CD8-positive, alpha-beta T cell (primary cell): ENCODE measurements at regions of chr6 and their contacts with region 1.

Region 1: GRCh38 chr6:34887753-34888513 is at the start of gene TAF11:
- DNase-seq: peak; percentile 74 to 96 (median 92)
- ATAC-seq: peak; percentile 67
- H3K4me3 ChIP-seq: peak within 1 kb of the TSS; percentile 84 to 93
- H3K4me3 Mint-ChIP-seq: peak within 1 kb of the TSS; percentile 100
- H3K27ac ChIP-seq: peak within 1 kb of the TSS; percentile 90 to 93
- H3K27ac Mint-ChIP-seq: peak within 1 kb of the TSS; percentile 99
- H3K4me1 ChIP-seq: peaks cover 21% of the 10 kb centered on the region
- H3K4me1 Mint-ChIP-seq: peaks cover 66% of the 10 kb centered on the region
- H3K27me3 ChIP-seq: no peaks in the 10 kb centered on the region
- H3K27me3 Mint-ChIP-seq: no peaks in the 10 kb centered on the region
- CTCF ChIP-seq: no peak
- total RNA-seq, gene TAF11: 40.0 to 40.6 TPM

Region 2: GRCh38 chr6:34392497-34393190 is 495.3 kb before region 1 on chr6 and contains the start of gene NUDT3:
- CTCF ChIA-PET with region 1: no interaction called
- POLR2A ChIA-PET with region 1: interaction called, 5 read pairs
- intact Hi-C with region 1: loop called in 1 of 2 experiments (anchors 10 kb)
- DNase-seq: peak; percentile 90 to 98 (median 93)
- ATAC-seq: peak; percentile 90
- H3K4me3 ChIP-seq: peak within 1 kb of the TSS; percentile 78 to 96
- H3K4me3 Mint-ChIP-seq: peak within 1 kb of the TSS; percentile 72
- H3K27ac ChIP-seq: peak within 1 kb of the TSS; percentile 71 to 75
- H3K27ac Mint-ChIP-seq: peak within 1 kb of the TSS; percentile 94
- H3K4me1 ChIP-seq: peaks cover 15% of the 10 kb centered on the region
- H3K4me1 Mint-ChIP-seq: peaks cover 26% of the 10 kb centered on the region
- H3K27me3 ChIP-seq: no peaks in the 10 kb centered on the region
- H3K27me3 Mint-ChIP-seq: no peaks in the 10 kb centered on the region
- CTCF ChIP-seq: peak; percentile 77
- total RNA-seq, gene NUDT3: 12.5 to 12.9 TPM

Region 3: GRCh38 chr6:34671801-34672656 is 215.9 kb before region 1 on chr6:
- CTCF ChIA-PET with region 1: no interaction called
- POLR2A ChIA-PET with region 1: interaction called, 3 read pairs
- intact Hi-C with region 1: loop called in 1 of 2 experiments (anchors 2 kb)
- DNase-seq: peak; percentile 52 to 94 (median 75)
- ATAC-seq: peak; percentile 98
- H3K4me3 ChIP-seq: peak overlapping the region in 1 of 2 experiments; percentile 21
- H3K4me3 Mint-ChIP-seq: peak overlapping the region; percentile 72
- H3K27ac ChIP-seq: peak overlapping the region; percentile 25 to 82
- H3K27ac Mint-ChIP-seq: peak overlapping the region; percentile 95
- H3K4me1 ChIP-seq: peaks cover 50% of the 10 kb centered on the region
- H3K4me1 Mint-ChIP-seq: peaks cover 71% of the 10 kb centered on the region
- H3K27me3 ChIP-seq: no peaks in the 10 kb centered on the region
- H3K27me3 Mint-ChIP-seq: no peaks in the 10 kb centered on the region
- CTCF ChIP-seq: no peak

Region 4: GRCh38 chr6:34757687-34758274 is 130.2 kb before region 1 on chr6:
- CTCF ChIA-PET with region 1: no interaction called
- POLR2A ChIA-PET with region 1: interaction called, 19 read pairs
- intact Hi-C with region 1: loop called (anchors 1 kb)
- DNase-seq: no peak
- ATAC-seq: no peak
- H3K4me3 ChIP-seq: peak overlapping the region; percentile 71 to 79
- H3K4me3 Mint-ChIP-seq: no peak overlapping the region
- H3K27ac ChIP-seq: peak overlapping the region; percentile 86 to 92
- H3K27ac Mint-ChIP-seq: no peak overlapping the region
- H3K4me1 ChIP-seq: peaks cover 18% of the 10 kb centered on the region
- H3K4me1 Mint-ChIP-seq: peaks cover 20% of the 10 kb centered on the region
- H3K27me3 ChIP-seq: no peaks in the 10 kb centered on the region
- H3K27me3 Mint-ChIP-seq: no peaks in the 10 kb centered on the region
- CTCF ChIP-seq: no peak

Region 5: GRCh38 chr6:34851361-34851760 is 36.6 kb before region 1 on chr6:
- CTCF ChIA-PET with region 1: no interaction called
- POLR2A ChIA-PET with region 1: no interaction called
- intact Hi-C with region 1: no loop called
- DNase-seq: no peak
- ATAC-seq: no peak
- H3K4me3 ChIP-seq: no peak overlapping the region
- H3K4me3 Mint-ChIP-seq: no peak overlapping the region
- H3K27ac ChIP-seq: no peak overlapping the region
- H3K27ac Mint-ChIP-seq: no peak overlapping the region
- H3K4me1 ChIP-seq: no peaks in the 10 kb centered on the region
- H3K4me1 Mint-ChIP-seq: no peaks in the 10 kb centered on the region
- H3K27me3 ChIP-seq: no peaks in the 10 kb centered on the region
- H3K27me3 Mint-ChIP-seq: no peaks in the 10 kb centered on the region
- CTCF ChIP-seq: no peak

Region 6: DNA sequence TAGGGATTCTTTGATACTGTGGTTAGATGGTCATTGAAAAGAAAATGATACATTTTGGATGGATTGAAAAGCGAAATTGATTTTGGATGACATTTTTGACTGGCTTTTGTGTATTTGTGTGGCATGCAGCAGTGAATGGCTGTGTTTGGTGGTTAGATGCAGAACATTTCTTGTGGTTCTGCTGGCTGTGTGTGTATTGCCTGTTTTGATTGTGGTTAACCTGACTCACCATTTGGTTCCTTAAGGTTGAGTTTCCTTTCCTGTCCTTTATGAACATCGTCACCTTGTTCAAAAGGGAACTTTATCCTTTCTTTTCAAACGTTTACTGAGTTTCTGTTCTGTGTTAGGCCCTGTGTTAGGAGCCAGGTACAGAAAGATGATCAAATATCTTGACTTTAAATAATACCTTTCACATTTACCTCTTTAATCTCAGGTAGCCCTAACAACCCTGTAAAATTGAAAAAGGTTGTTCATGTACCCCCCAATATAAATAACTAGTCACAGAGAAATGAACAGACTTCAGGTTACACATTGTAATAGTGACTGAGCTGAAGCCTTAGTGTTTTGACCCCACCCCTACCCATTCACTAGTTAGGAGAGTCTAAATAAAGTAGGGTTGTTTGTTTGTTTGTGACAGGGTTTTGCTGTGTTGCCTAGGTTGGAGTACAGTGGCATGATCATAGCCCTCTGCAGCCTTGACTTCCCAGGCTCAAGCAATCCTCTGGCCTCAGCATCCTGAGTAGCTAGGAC is 25.0 kb after region 1 on chr6:
- CTCF ChIA-PET with region 1: no interaction called
- POLR2A ChIA-PET with region 1: interaction called, 14 read pairs
- intact Hi-C with region 1: loop called (anchors 2 kb)
- DNase-seq: peak in 7 of 9 experiments; percentile 10 to 73 (median 38)
- ATAC-seq: peak; percentile 89
- H3K4me3 ChIP-seq: peak overlapping the region in 1 of 2 experiments; percentile 4
- H3K4me3 Mint-ChIP-seq: peak overlapping the region; percentile 55
- H3K27ac ChIP-seq: no peak overlapping the region
- H3K27ac Mint-ChIP-seq: peak overlapping the region; percentile 27
- H3K4me1 ChIP-seq: peaks cover 16% of the 10 kb centered on the region
- H3K4me1 Mint-ChIP-seq: peaks cover 36% of the 10 kb centered on the region
- H3K27me3 ChIP-seq: no peaks in the 10 kb centered on the region
- H3K27me3 Mint-ChIP-seq: no peaks in the 10 kb centered on the region
- CTCF ChIP-seq: no peak

Region 7: DNA sequence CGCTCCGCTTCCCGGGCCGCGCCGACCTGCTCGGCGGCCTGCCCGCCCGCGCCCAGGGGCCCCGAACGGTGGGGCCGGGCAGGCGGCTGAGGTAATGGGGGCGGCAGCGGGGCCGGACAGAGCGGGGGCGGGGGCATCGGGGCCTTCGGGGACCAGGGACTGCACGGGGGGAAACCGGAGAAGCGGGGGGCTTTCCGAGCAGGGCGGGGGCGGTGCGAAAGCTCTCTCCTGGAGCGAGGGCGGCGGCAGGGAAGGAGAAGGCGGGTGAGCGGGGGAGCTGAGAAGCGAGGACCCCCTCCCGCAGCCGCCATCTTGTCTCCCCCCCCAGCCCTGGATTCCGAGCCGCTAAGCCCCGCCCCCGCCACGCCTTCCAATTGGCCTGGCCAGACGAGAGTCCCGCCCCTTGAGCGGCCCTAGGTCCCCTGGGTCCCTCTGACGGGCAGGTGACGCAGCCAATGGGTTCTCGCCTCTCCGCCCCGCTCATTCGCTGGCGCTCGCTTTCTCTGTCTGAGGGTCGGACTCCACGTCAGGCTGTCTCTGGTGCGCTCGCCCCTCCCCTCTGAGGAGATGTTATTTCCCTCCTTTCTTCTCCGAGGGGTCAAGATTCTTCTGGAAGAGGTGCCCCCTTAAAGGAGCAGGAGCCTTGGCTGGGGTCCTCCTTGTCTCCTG is 1309.1 kb after region 1 on chr6:
- CTCF ChIA-PET with region 1: no interaction called
- POLR2A ChIA-PET with region 1: no interaction called
- intact Hi-C with region 1: loop called in 1 of 2 experiments (anchors 5 kb)
- DNase-seq: peak; percentile 99 to 100 (median 100)
- ATAC-seq: peak; percentile 91
- H3K4me3 ChIP-seq: peak overlapping the region; percentile 61 to 68
- H3K4me3 Mint-ChIP-seq: peak overlapping the region; percentile 88
- H3K27ac ChIP-seq: peak overlapping the region; percentile 74 to 77
- H3K27ac Mint-ChIP-seq: peak overlapping the region; percentile 94
- H3K4me1 ChIP-seq: peaks cover 29% of the 10 kb centered on the region
- H3K4me1 Mint-ChIP-seq: peaks cover 55% of the 10 kb centered on the region
- H3K27me3 ChIP-seq: no peaks in the 10 kb centered on the region
- H3K27me3 Mint-ChIP-seq: no peaks in the 10 kb centered on the region
- CTCF ChIP-seq: no peak

Region 8: GRCh38 chr6:36885461-36886401 is 1997.8 kb after region 1 on chr6 and contains the start of gene C6orf89:
- CTCF ChIA-PET with region 1: no interaction called
- POLR2A ChIA-PET with region 1: no interaction called
- intact Hi-C with region 1: loop called in 1 of 2 experiments (anchors 10 kb)
- DNase-seq: peak; percentile 91 to 99 (median 97)
- ATAC-seq: peak; percentile 98
- H3K4me3 ChIP-seq: peak within 1 kb of the TSS; percentile 75 to 78
- H3K4me3 Mint-ChIP-seq: peak within 1 kb of the TSS; percentile 91
- H3K27ac ChIP-seq: peak within 1 kb of the TSS; percentile 63 to 91
- H3K27ac Mint-ChIP-seq: peak within 1 kb of the TSS; percentile 94
- H3K4me1 ChIP-seq: peaks cover 14% of the 10 kb centered on the region
- H3K4me1 Mint-ChIP-seq: peaks cover 38% of the 10 kb centered on the region
- H3K27me3 ChIP-seq: no peaks in the 10 kb centered on the region
- H3K27me3 Mint-ChIP-seq: no peaks in the 10 kb centered on the region
- CTCF ChIP-seq: peak; percentile 81
- total RNA-seq, gene C6orf89: 22.2 TPM